ENCODE measurements at regions of chr15 and their contacts with region 1.

Region 1: GRCh38 chr15:59174835-59175831 is 31.5 kb upstream of the LDHAL6B start:
- DNase-seq: no peak

Region 2: GRCh38 chr15:59138243-59138642 is 36.9 kb before region 1 on chr15:
- intact Hi-C with region 1: no loop called
- DNase-seq: no peak

Region 3: DNA sequence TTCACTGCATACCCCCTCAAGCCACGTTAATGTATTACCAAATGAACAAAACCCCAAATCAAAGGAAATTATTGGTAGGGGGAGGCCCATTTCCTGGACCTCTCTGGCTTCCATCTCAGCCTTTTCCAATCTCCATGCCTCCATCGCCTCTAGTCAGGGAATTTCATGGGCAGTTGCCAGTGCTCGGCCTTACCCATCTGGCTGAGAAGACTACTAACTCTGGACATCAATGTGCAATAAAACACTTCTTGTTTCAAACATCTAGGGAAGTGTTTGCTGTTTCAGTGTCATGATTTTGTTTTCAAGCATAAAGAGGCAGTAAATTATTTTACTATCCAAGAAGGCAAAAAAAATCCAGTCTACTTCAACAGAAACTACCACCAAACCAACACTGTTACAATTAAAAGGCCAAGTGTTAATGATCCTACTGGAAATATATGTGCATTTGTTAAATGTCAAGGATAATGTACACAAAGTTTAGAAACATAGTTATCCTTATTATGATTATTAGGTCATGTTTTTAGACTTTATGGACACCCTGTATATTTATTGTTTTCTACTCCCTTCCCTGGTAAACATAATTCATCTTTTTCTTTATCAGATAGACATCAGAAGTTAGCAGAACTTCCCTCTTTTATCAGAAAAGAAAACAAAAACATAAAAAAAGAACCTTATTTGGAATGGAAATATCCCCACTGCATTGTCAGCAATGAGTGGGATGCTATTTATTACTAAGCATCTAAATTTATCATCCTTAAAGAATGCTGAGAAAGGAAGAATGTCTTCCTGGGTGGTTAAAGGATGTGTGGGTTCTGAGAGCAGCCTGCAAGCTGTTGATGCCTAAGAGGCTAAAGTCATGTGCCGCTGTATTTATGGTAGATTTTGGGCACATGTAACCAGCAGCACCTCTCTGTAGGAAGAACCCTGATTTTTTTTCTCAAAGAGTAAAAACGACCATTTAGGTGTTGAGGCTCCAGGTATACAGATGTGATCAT is 46.7 kb after region 1 on chr15:
- intact Hi-C with region 1: loop called in 1 of 2 experiments (anchors 10 kb)
- DNase-seq: no peak

Measured in posterior vena cava (tissue), 2 donors.